ENCODE measurements at regions of chrX and their contacts with region 1.

Region 1: DNA sequence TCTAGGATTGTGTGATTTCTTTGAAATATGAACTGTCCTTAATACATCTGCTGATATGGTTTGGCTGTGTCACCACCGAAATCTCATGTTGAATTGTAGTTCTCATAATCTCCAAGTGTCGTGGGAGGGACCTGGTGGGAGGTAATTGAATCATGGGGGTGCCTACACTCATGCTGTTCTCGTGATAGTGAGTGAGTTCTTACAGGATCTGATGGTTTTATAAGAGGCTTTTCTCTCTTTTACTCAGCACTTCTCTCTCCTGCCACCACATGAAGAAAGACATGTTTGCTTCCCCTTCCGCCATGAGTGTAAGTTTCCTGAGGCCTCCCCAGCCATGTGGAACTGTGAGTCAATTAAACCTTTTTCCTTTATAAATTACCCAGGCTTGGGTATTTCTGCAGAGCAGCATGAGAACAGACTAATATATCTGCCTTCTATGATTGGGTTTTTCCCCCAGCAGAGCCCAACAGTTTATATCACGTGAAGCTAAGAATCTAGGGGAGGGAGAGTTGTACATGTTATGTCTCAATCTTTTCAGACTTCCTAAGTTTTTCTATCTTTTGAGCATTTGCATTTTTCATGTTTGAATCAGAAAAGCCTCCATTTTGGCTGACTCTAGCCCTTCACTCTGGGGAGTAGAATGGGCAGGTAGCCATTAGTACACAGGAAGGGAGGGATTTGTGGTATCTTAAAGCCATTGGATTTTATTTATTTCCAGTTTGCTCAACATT is 58.9 kb downstream of the PLAC1 start:
- DNase-seq: peak; percentile 67
- ATAC-seq: peak; percentile 92
- H3K4me3 Mint-ChIP-seq: no peak overlapping the region
- H3K27ac Mint-ChIP-seq: peak overlapping the region; percentile 25
- H3K4me1 Mint-ChIP-seq: peaks cover 28% of the 10 kb centered on the region
- H3K27me3 Mint-ChIP-seq: peaks cover 26% of the 10 kb centered on the region

Region 2: DNA sequence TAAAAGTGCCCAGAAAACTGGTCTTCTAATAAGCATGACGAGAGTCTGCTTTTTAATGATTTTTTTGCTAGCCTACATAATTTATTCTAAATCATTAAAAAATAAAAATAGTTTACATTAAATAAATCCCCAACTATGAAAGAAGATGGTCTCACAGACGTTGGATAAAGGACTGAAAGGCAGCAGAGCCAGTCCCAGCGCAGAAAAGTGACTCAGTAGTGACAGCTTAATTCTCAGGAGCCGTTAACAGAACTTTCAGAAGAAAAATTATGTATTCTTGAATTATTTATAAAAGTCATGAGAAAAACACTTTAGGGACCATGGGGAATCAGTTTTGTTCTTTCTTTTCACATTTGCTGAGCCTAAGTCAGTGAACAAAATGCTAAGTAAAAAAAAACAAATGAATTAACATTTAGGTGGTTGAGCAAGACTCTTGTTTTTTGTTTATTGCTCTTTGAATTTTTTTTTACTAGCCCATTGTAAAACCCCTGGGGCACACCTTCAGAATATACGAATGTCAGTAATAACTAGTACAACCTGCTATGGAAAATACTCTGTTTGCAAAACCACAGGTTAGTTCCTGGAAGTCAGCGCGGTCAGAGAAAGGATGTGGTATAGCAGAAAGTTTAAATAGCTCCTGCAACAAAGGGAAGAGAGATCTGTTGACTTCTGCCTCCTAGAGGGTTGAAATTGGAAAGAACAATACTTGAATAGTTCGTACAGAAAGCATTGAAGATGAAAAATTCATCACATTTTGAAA is 412.8 kb before region 1 on chrX:
- CTCF ChIA-PET with region 1: no interaction called
- POLR2A ChIA-PET with region 1: interaction called, 12 read pairs
- intact Hi-C with region 1: no loop called
- DNase-seq: peak; percentile 78
- ATAC-seq: peak; percentile 88
- H3K4me3 Mint-ChIP-seq: peak overlapping the region; percentile 64
- H3K27ac Mint-ChIP-seq: peak overlapping the region; percentile 51
- H3K4me1 Mint-ChIP-seq: peaks cover 16% of the 10 kb centered on the region
- H3K27me3 Mint-ChIP-seq: peaks cover 3% of the 10 kb centered on the region

Region 3: DNA sequence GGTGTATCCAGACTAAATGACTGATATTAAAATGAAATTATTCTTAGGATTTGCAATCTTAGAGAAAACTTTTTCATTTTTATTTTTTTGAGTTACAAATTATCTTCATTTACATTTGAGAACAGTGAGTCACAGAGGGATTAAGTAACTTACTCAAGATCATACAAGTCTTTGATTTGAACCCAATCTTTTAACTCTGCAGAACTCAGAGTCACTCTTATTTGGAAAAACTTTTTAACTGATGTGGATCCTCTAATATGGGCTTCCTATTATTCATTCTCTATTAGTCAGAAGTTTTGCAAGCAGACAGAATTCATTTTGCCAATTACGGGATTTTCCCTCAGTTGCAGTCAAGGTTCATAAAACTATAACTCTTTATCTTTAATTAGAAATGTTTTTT is 119.3 kb before region 1 on chrX:
- CTCF ChIA-PET with region 1: no interaction called
- POLR2A ChIA-PET with region 1: no interaction called
- intact Hi-C with region 1: no loop called
- DNase-seq: no peak
- ATAC-seq: no peak
- H3K4me3 Mint-ChIP-seq: no peak overlapping the region
- H3K27ac Mint-ChIP-seq: no peak overlapping the region
- H3K4me1 Mint-ChIP-seq: no peaks in the 10 kb centered on the region
- H3K27me3 Mint-ChIP-seq: no peaks in the 10 kb centered on the region

Region 4: DNA sequence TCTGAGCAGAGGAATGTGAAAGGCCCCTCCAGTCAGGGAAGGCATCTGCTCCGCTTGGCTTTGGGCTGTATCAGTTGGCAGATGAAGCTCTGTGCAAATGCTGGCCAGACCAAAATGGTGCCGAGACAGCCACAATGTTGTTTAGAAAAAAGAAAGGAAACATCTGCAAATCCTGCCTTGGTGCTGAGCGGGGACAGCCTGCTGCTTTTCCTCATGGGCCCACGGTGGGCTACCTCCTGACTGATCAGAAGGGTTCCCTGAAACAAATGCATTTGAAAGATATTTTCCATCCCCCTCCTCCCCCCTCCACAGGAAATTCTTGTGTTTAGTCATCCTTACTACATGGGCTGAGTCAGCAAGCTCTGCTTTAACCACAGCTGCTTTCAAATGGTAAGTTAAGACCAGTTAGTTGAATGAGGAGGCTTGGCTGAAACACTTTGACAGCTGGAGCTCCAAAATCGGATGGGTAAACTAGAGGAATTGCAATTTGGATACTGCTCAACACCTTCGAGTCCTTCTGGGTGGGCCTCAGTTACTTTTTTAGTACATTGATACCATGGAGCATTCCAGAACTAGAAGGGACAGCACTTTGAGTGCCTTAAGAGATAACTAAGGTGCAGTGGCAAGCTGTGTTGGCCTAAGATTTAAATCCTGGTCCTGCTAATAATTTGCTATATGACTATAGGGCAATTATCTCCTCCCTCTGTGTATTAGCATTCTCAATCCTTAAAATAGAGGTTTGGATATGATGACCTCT is 22.9 kb after region 1 on chrX:
- CTCF ChIA-PET with region 1: no interaction called
- POLR2A ChIA-PET with region 1: no interaction called
- intact Hi-C with region 1: loop called (anchors 1 kb)
- DNase-seq: peak; percentile 46
- ATAC-seq: peak; percentile 89
- H3K4me3 Mint-ChIP-seq: no peak overlapping the region
- H3K27ac Mint-ChIP-seq: no peak overlapping the region
- H3K4me1 Mint-ChIP-seq: peaks cover 29% of the 10 kb centered on the region
- H3K27me3 Mint-ChIP-seq: peaks cover 18% of the 10 kb centered on the region

Region 5: DNA sequence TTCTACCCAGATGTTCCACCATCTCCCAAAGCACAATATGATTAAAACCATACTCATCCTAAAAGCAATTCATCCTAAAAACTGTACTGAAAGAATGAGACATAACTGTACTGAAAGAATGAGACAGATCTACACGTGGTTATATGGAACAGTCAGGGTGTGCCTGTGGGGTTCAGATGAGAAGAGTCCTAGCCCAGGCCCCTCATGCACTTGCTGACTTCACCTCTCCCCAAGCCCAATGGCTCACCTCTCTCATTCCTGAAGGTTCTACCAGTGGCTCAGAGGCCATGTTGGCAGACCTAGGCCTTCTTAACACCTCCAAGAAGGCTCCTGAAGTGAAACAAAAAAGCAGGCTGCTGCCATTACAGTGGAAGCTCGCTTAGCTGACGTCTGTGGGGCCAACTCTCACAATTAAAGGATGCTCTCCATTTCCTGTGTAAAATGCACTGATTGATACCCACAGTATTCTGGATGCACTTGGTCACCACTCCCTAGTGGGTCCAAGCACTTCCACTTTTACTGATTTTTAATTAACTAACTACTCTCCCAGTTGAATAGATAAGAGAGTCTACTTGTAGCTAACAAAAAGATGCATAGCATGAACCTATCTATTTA is 55.2 kb after region 1 on chrX:
- CTCF ChIA-PET with region 1: no interaction called
- POLR2A ChIA-PET with region 1: interaction called, 4 read pairs
- intact Hi-C with region 1: loop called (anchors 1 kb)
- DNase-seq: peak; percentile 64
- ATAC-seq: peak; percentile 99
- H3K4me3 Mint-ChIP-seq: no peak overlapping the region
- H3K27ac Mint-ChIP-seq: no peak overlapping the region
- H3K4me1 Mint-ChIP-seq: peaks cover 14% of the 10 kb centered on the region
- H3K27me3 Mint-ChIP-seq: peaks cover 21% of the 10 kb centered on the region

Region 6: DNA sequence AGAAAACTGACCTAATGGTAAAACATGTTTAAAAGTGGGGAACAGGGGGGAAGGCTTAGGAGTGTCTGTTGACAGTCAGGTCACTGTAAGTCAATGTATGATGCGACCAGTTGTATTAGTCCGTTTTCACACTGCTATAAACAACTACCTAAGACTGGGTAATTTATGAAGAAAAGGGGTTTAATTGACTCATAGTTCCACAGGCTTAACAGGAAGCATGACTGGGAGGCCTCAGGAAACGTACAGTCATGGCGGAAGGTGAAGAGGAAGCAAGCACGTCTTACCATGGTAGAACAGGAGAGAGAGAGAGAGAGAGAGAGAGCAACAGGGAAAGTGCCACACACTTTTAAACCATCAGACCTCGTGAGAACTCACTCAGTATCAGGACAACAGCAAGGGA is 71.9 kb after region 1 on chrX:
- CTCF ChIA-PET with region 1: no interaction called
- POLR2A ChIA-PET with region 1: no interaction called
- intact Hi-C with region 1: loop called in 1 of 2 experiments (anchors 1 kb)
- DNase-seq: peak; percentile 39
- ATAC-seq: peak; percentile 55
- H3K4me3 Mint-ChIP-seq: no peak overlapping the region
- H3K27ac Mint-ChIP-seq: no peak overlapping the region
- H3K4me1 Mint-ChIP-seq: peaks cover 6% of the 10 kb centered on the region
- H3K27me3 Mint-ChIP-seq: peaks cover 4% of the 10 kb centered on the region

Region 7: GRCh38 chrX:134718105-134718965 is 119.0 kb after region 1 on chrX:
- CTCF ChIA-PET with region 1: no interaction called
- POLR2A ChIA-PET with region 1: no interaction called
- intact Hi-C with region 1: loop called in 1 of 2 experiments (anchors 2 kb)
- DNase-seq: no peak
- ATAC-seq: peak; percentile 23
- H3K4me3 Mint-ChIP-seq: no peak overlapping the region
- H3K27ac Mint-ChIP-seq: no peak overlapping the region
- H3K4me1 Mint-ChIP-seq: peaks cover 21% of the 10 kb centered on the region
- H3K27me3 Mint-ChIP-seq: no peaks in the 10 kb centered on the region

Measured in activated CD4-positive, alpha-beta T cell treated with anti-CD3 and anti-CD28 coated beads for 36 hours (primary cell).